ENCODE measurements at regions of chr2 and their contacts with region 1.

Region 1: GRCh38 chr2:73071360-73072133 is at the start of gene SFXN5:
- DNase-seq: peak; percentile 91 to 94 (median 93)
- H3K4me3 ChIP-seq: peak within 1 kb of the TSS; percentile 92
- H3K4me3 Mint-ChIP-seq: peak within 1 kb of the TSS; percentile 86 to 98 (median 93)
- H3K27ac ChIP-seq: peak within 1 kb of the TSS; percentile 85
- H3K27ac Mint-ChIP-seq: peak within 1 kb of the TSS; percentile 86 to 96 (median 90)
- H3K4me1 ChIP-seq: peaks cover 12% of the 10 kb centered on the region
- H3K4me1 Mint-ChIP-seq: peaks cover 26 to 32% (median 29%) of the 10 kb centered on the region in 3 donors
- H3K27me3 ChIP-seq: no peaks in the 10 kb centered on the region
- H3K27me3 Mint-ChIP-seq: peaks cover 0 to 5% of the 10 kb centered on the region in 2 donors
- total RNA-seq, gene SFXN5: 16.8 to 19.1 TPM

Region 2: DNA sequence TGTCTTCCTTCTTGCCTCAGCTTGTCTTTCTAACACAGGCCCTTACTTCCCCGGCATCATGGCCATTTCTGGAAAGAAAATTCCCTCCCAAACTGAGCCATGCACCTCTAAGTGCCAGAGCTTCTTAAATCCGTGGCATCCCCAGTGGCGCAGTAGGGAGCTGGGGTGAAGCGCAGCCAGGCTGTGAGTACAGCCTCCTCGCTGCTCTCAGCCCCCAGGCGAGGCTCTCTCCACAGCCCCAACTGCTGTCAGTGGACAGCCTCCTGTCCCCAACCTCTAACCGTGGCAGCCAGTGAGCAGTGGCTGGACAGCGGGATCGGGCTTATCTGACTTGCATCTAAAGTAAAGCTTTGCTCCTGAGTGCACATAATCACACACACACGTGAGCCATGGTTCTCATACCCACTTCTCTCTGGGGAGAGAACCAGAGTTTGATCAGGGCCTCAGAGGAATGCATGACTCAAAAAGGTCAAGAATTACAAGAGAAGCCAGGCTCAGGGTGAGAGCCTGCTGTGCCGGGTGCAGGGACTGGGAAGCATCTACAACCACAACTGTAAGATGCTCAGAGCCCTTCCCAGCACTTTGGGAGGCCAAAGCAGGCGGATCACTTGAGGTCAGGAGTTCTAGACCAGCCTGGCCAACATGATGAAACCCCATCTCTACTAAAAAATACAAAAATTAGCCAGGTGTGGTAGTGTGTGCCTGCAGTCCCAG is 50.7 kb before region 1 on chr2:
- CTCF ChIA-PET with region 1: no interaction called
- POLR2A ChIA-PET with region 1: no interaction called
- DNase-seq: no peak
- H3K4me3 ChIP-seq: no peak overlapping the region
- H3K4me3 Mint-ChIP-seq: no peak overlapping the region
- H3K27ac ChIP-seq: no peak overlapping the region
- H3K27ac Mint-ChIP-seq: peak overlapping the region in 1 of 8 donors; percentile 68
- H3K4me1 ChIP-seq: no peaks in the 10 kb centered on the region
- H3K4me1 Mint-ChIP-seq: no peaks in the 10 kb centered on the region
- H3K27me3 ChIP-seq: no peaks in the 10 kb centered on the region
- H3K27me3 Mint-ChIP-seq: no peaks in the 10 kb centered on the region

Region 3: DNA sequence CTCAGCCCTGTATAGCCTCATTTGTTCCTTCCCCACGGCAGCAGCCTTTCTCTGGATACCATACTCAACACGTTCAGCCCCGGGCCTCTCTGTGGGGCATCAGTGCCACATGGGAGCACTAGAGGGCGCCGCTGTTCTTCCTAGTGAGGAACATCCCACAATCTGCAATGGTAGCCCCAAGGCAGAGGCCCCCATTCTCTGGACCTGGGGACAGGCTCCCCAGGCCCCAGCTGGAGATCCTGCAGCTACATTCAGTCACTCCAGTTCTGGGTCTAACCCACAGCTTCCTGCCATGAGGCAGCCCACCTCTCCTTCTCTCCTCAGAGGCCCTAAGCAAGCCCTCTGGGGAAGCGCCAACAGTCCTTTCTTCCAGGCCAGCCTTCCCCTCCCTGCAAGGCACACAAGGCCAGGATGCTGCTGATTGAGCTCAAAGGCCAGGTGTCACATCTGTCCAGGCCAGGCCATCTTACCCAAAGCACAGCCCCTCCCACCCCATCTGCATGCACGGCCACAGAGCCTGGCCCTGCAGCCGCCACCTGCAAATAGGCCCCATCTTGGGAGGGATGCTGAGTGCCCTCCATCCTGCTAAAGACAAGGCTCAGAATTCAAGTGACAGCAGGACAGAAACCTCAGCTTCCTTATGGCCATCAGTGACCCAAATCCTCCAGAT is 14.3 kb after region 1 on chr2:
- CTCF ChIA-PET with region 1: interaction called, 19 read pairs
- POLR2A ChIA-PET with region 1: no interaction called
- DNase-seq: peak; percentile 62 to 86 (median 72)
- H3K4me3 ChIP-seq: no peak overlapping the region
- H3K4me3 Mint-ChIP-seq: no peak overlapping the region
- H3K27ac ChIP-seq: no peak overlapping the region
- H3K27ac Mint-ChIP-seq: no peak overlapping the region
- H3K4me1 ChIP-seq: no peaks in the 10 kb centered on the region
- H3K4me1 Mint-ChIP-seq: peaks cover 0 to 2% (median 0%) of the 10 kb centered on the region in 3 donors
- H3K27me3 ChIP-seq: no peaks in the 10 kb centered on the region
- H3K27me3 Mint-ChIP-seq: no peaks in the 10 kb centered on the region